B cell (primary cell): ENCODE measurements at regions of chr11 and their contacts with region 1.

Region 1: DNA sequence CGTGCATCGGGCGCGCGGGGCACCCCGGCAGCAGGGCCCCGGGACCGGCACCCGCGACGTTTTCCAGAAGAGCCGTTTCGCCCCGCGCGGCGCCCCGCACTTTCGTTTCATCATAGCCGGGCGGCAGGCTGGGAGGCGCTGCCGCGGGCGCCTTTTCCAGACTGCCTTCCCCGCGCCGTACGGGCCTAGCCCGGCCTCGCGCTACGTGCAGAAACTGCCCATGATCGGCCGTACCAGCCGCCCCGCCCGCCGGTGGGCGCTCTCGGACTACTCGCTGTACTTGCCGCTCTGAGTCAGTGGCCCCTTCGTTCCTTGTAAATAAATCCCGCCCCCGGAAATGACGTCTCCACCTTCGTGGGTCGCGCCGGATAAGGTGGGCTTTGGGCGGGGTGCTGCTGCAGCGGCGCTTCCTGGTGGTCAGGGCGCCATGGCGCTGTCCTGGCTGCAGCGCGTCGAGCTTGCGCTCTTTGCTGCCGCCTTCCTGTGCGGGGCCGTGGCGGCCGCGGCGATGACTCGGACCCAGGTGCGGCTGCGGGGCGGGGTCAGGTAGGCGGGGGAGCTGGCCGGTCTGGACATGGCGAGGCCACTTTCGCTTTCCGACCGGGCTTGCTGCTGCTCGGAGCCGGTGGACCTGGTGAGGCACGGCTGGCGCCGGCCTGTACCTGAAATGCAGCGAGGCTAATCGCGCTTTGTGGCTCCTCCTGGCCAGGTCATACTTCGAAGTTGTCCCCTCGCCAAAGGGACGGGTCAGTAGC is at the start of gene TMEM179B:
- DNase-seq: peak; percentile 98
- ATAC-seq: peak; percentile 70
- H3K4me3 ChIP-seq: peak within 1 kb of the TSS; percentile 87 to 97 (median 94)
- H3K4me3 Mint-ChIP-seq: peak within 1 kb of the TSS; percentile 97
- H3K27ac ChIP-seq: peak within 1 kb of the TSS; percentile 68 to 78
- H3K27ac Mint-ChIP-seq: peak within 1 kb of the TSS; percentile 96
- H3K4me1 ChIP-seq: peaks cover 27 to 35% of the 10 kb centered on the region in 2 donors
- H3K4me1 Mint-ChIP-seq: peaks cover 48% of the 10 kb centered on the region
- H3K27me3 ChIP-seq: no peaks in the 10 kb centered on the region
- H3K27me3 Mint-ChIP-seq: no peaks in the 10 kb centered on the region
- CTCF ChIP-seq: peak; percentile 65
- total RNA-seq, gene TMEM179B: 62.3 and 71.5 TPM in 2 replicates

Region 2: GRCh38 chr11:62394825-62395538 is 392.2 kb before region 1 on chr11:
- CTCF ChIA-PET with region 1: interaction called, 3 read pairs
- POLR2A ChIA-PET with region 1: no interaction called
- intact Hi-C with region 1: loop called (anchors 10 kb)
- DNase-seq: peak; percentile 81
- ATAC-seq: peak; percentile 68
- H3K4me3 ChIP-seq: no peak overlapping the region
- H3K4me3 Mint-ChIP-seq: no peak overlapping the region
- H3K27ac ChIP-seq: no peak overlapping the region
- H3K27ac Mint-ChIP-seq: no peak overlapping the region
- H3K4me1 ChIP-seq: no peaks in the 10 kb centered on the region
- H3K4me1 Mint-ChIP-seq: peaks cover 2% of the 10 kb centered on the region
- H3K27me3 ChIP-seq: peaks cover 0 to 5% (median 0%) of the 10 kb centered on the region in 4 experiments
- H3K27me3 Mint-ChIP-seq: peaks cover 11% of the 10 kb centered on the region
- CTCF ChIP-seq: peak; percentile 79

Region 3: GRCh38 chr11:62771144-62772021 is 15.8 kb before region 1 on chr11 and contains the start of gene TAF6L:
- CTCF ChIA-PET with region 1: interaction called, 70 read pairs
- POLR2A ChIA-PET with region 1: interaction called, 24 read pairs
- intact Hi-C with region 1: loop called (anchors 1 kb)
- DNase-seq: peak; percentile 88
- ATAC-seq: peak; percentile 90
- H3K4me3 ChIP-seq: peak within 1 kb of the TSS; percentile 58 to 97 (median 68)
- H3K4me3 Mint-ChIP-seq: peak within 1 kb of the TSS; percentile 95
- H3K27ac ChIP-seq: peak within 1 kb of the TSS; percentile 63 to 84
- H3K27ac Mint-ChIP-seq: peak within 1 kb of the TSS; percentile 96
- H3K4me1 ChIP-seq: peaks cover 15 to 23% of the 10 kb centered on the region in 2 donors
- H3K4me1 Mint-ChIP-seq: peaks cover 26% of the 10 kb centered on the region
- H3K27me3 ChIP-seq: no peaks in the 10 kb centered on the region
- H3K27me3 Mint-ChIP-seq: no peaks in the 10 kb centered on the region
- CTCF ChIP-seq: no peak
- total RNA-seq, gene TAF6L: 43.2 and 48.2 TPM in 2 replicates

Region 4: DNA sequence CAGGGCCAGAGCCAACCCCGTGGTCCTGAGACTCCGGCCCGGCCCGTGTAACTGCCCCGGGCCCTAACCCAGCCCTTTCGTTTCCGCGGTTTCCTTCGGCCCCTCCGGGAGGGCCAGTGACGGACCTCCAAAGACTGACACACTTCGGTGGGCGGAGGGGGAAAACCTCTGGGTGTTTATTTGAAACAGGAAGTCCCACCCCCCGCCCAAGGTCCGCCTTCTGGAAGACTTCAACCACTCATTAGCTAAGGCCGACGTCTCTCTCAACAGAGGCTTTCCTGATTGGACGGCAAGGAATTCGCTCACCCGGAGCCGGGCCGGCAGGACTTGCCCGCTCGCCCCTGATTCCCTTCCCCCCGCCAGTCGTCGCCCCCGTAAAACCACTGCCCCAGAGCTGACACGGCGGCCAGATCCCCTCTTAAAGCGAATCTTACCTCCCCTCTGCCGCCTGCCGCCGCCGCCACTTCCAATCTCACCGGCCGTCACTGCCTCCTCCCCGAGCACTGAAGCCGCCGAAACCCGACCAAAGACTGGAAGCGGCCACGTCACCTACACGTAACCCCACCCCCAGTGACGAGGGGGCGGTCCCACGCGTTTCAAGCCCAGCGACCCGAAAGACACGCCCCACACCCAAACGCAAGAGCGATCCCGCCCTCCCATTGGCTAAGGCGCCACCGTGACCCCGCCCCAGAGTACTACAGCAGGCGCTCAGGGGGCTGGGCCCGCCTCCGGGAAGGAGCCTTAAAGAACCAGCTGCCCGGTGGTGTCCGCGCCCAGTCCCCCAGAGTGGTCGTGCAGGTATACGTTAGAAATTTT is 44.5 kb after region 1 on chr11 and contains the start of gene STX5:
- CTCF ChIA-PET with region 1: interaction called, 14 read pairs
- POLR2A ChIA-PET with region 1: interaction called, 22 read pairs
- intact Hi-C with region 1: loop called (anchors 1 kb)
- DNase-seq: peak; percentile 100
- ATAC-seq: peak; percentile 95
- H3K4me3 ChIP-seq: peak within 1 kb of the TSS; percentile 69 to 96 (median 92)
- H3K4me3 Mint-ChIP-seq: peak within 1 kb of the TSS; percentile 92
- H3K27ac ChIP-seq: peak within 1 kb of the TSS; percentile 96 to 99
- H3K27ac Mint-ChIP-seq: peak within 1 kb of the TSS; percentile 97
- H3K4me1 ChIP-seq: peaks cover 16 to 30% of the 10 kb centered on the region in 2 donors
- H3K4me1 Mint-ChIP-seq: peaks cover 43% of the 10 kb centered on the region
- H3K27me3 ChIP-seq: no peaks in the 10 kb centered on the region
- H3K27me3 Mint-ChIP-seq: no peaks in the 10 kb centered on the region
- CTCF ChIP-seq: no peak
- total RNA-seq, gene STX5: 98.1 and 99.1 TPM in 2 replicates

Region 5: GRCh38 chr11:62855571-62856332 is 68.6 kb after region 1 on chr11:
- CTCF ChIA-PET with region 1: interaction called, 101 read pairs
- POLR2A ChIA-PET with region 1: interaction called, 22 read pairs
- intact Hi-C with region 1: loop called (anchors 1 kb)
- DNase-seq: peak; percentile 99
- ATAC-seq: peak; percentile 92
- H3K4me3 ChIP-seq: peak overlapping the region; percentile 68 to 100 (median 99)
- H3K4me3 Mint-ChIP-seq: peak overlapping the region; percentile 99
- H3K27ac ChIP-seq: peak overlapping the region; percentile 65 to 84
- H3K27ac Mint-ChIP-seq: peak overlapping the region; percentile 98
- H3K4me1 ChIP-seq: peaks cover 39 to 58% of the 10 kb centered on the region in 2 donors
- H3K4me1 Mint-ChIP-seq: peaks cover 60% of the 10 kb centered on the region
- H3K27me3 ChIP-seq: no peaks in the 10 kb centered on the region
- H3K27me3 Mint-ChIP-seq: no peaks in the 10 kb centered on the region
- CTCF ChIP-seq: no peak